ENCODE measurements at regions of chr10 and their contacts with region 1.

Region 1: DNA sequence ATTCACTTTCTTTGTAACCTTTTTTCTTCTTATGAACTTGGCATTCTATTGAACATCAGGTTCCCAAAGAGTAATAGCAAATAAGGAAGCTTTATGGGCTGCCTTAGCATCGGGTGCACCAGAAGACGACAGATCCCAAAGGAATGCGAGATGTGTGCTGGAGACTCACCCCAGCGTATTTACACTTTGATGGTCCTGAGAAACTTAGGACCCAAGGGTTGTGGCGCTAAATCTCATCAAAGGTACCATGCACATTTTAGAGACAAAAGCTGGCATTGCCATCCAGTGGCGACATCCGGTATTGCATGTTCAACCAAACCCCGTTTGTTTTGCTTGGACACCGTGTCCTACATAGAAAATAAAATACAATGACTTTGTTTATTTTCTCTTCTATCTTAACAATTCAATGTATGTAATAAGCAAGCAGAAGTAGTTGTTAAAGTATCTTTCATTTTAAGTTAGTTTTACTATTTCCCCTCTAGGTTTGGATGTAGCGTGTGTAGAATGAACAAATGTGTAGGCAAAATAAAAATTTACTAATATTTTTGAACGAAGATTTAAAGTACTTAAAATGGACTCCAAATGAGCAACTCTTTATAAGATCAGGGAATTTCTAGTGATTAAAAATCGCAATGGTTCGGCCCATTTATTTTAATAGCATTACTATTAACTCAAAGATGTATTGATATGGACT is 1154.8 kb downstream of the GATA3 start:
- DNase-seq: peak; percentile 90
- H3K4me3 Mint-ChIP-seq: no peak overlapping the region
- H3K27ac Mint-ChIP-seq: no peak overlapping the region
- H3K4me1 Mint-ChIP-seq: peaks cover 3% of the 10 kb centered on the region
- H3K27me3 Mint-ChIP-seq: peaks cover 17% of the 10 kb centered on the region

Region 2: GRCh38 chr10:7872041-7872442 is 1337.2 kb before region 1 on chr10:
- intact Hi-C with region 1: loop called (anchors 1 kb)
- DNase-seq: no peak
- H3K4me3 Mint-ChIP-seq: peak overlapping the region; percentile 63
- H3K27ac Mint-ChIP-seq: no peak overlapping the region
- H3K4me1 Mint-ChIP-seq: peaks cover 7% of the 10 kb centered on the region
- H3K27me3 Mint-ChIP-seq: no peaks in the 10 kb centered on the region

Region 3: GRCh38 chr10:8035006-8035640 is 1174.1 kb before region 1 on chr10:
- intact Hi-C with region 1: loop called (anchors 5 kb)
- DNase-seq: peak; percentile 62
- H3K4me3 Mint-ChIP-seq: no peak overlapping the region
- H3K27ac Mint-ChIP-seq: peak overlapping the region; percentile 61
- H3K4me1 Mint-ChIP-seq: peaks cover 13% of the 10 kb centered on the region
- H3K27me3 Mint-ChIP-seq: peaks cover 74% of the 10 kb centered on the region

Region 4: GRCh38 chr10:9010093-9010492 is 199.2 kb before region 1 on chr10:
- intact Hi-C with region 1: loop called (anchors 10 kb)
- DNase-seq: peak; percentile 67
- H3K4me3 Mint-ChIP-seq: no peak overlapping the region
- H3K27ac Mint-ChIP-seq: peak overlapping the region; percentile 72
- H3K4me1 Mint-ChIP-seq: peaks cover 21% of the 10 kb centered on the region
- H3K27me3 Mint-ChIP-seq: no peaks in the 10 kb centered on the region

Measured in activated CD4-positive, alpha-beta T cell treated with anti-CD3 and anti-CD28 coated beads, Interleukin-2, amount 10 ng/mL, durations not matched to agents 24 days and 14 days (primary cell).